ENCODE measurements at regions of chr1 and their contacts with region 1.

Region 1: GRCh38 chr1:95233737-95234500 is at the start of gene RWDD3:
- DNase-seq: peak; percentile 94
- H3K4me3 ChIP-seq: peak within 1 kb of the TSS; percentile 87
- H3K27ac ChIP-seq: peak within 1 kb of the TSS; percentile 86
- H3K4me1 ChIP-seq: no peaks in the 10 kb centered on the region
- H3K27me3 ChIP-seq: no peaks in the 10 kb centered on the region
- CTCF ChIP-seq: peak; percentile 81
- total RNA-seq, gene RWDD3: 12.9 to 22.0 TPM

Region 2: DNA sequence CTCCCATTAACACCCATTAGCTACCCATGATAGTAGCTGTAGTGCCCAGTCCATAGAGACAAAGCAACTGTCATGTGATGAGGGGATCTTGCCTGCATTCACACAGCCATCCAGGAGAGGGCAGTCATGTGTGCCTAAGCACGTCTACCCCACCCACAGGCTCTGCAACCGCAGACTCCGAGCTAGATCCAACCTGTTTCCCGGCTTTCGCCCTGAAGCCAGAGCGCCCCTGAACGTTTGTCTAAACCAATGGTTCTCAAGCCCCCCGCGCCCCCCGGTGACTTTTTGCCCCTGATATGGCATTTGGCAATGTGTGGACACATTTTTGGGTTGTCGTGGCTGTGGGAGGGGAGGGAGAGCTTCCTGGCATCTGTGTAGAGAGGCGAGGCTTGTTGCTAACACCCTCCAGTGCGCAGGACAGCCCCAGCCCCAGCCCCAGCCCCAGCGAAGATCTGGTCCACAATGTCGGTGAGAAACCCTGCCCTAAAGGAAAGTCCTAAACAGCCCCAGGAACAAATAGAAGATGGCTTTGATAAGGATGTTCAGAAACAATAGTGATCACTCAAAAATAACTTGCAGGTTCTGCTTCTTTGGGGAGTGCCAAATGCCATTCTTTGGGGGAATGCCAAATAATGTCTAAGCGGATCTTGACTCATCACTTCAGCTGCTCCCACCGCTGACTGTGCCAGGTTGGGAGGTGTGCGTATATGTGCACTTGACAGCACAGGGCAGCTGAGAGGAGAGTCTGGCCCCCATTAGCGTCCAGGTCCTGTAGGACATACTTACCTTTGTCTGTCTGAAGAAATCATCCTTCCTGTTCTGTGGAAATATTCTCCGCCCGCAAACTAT is 379.2 kb before region 1 on chr1:
- intact Hi-C with region 1: loop called (anchors 10 kb)
- DNase-seq: peak; percentile 92
- H3K4me3 ChIP-seq: peak overlapping the region; percentile 23
- H3K27ac ChIP-seq: peak overlapping the region; percentile 57
- H3K4me1 ChIP-seq: peaks cover 7% of the 10 kb centered on the region
- H3K27me3 ChIP-seq: no peaks in the 10 kb centered on the region
- CTCF ChIP-seq: peak; percentile 57

Region 3: GRCh38 chr1:95072532-95073419 is 161.1 kb before region 1 on chr1 and contains the start of gene ALG14:
- intact Hi-C with region 1: loop called (anchors 10 kb)
- DNase-seq: peak; percentile 97
- H3K4me3 ChIP-seq: peak within 1 kb of the TSS; percentile 50
- H3K27ac ChIP-seq: peak within 1 kb of the TSS; percentile 87
- H3K4me1 ChIP-seq: no peaks in the 10 kb centered on the region
- H3K27me3 ChIP-seq: no peaks in the 10 kb centered on the region
- CTCF ChIP-seq: no peak
- total RNA-seq, gene ALG14: 11.4 to 19.4 TPM

Region 4: GRCh38 chr1:95122151-95122697 is 111.7 kb before region 1 on chr1:
- intact Hi-C with region 1: loop called (anchors 10 kb)
- DNase-seq: no peak
- H3K4me3 ChIP-seq: no peak overlapping the region
- H3K27ac ChIP-seq: no peak overlapping the region
- H3K4me1 ChIP-seq: no peaks in the 10 kb centered on the region
- H3K27me3 ChIP-seq: no peaks in the 10 kb centered on the region
- CTCF ChIP-seq: no peak